A549 (cell line): ENCODE measurements at regions of chr7 and their contacts with region 1.

Region 1: GRCh38 chr7:73856941-73857340 is 4.0 kb upstream of the TMEM270 start:
- DNase-seq: no peak
- ATAC-seq: no peak
- H3K4me3 ChIP-seq: no peak overlapping the region
- H3K27ac ChIP-seq: no peak overlapping the region; a peak in 1 of 6 replicates
- H3K4me1 ChIP-seq: peaks cover 8% of the 10 kb centered on the region
- CTCF ChIP-seq: no peak
- EP300 ChIP-seq: no peak
- POLR2A ChIP-seq: no peak
- RAD21 ChIP-seq: no peak

Region 2: DNA sequence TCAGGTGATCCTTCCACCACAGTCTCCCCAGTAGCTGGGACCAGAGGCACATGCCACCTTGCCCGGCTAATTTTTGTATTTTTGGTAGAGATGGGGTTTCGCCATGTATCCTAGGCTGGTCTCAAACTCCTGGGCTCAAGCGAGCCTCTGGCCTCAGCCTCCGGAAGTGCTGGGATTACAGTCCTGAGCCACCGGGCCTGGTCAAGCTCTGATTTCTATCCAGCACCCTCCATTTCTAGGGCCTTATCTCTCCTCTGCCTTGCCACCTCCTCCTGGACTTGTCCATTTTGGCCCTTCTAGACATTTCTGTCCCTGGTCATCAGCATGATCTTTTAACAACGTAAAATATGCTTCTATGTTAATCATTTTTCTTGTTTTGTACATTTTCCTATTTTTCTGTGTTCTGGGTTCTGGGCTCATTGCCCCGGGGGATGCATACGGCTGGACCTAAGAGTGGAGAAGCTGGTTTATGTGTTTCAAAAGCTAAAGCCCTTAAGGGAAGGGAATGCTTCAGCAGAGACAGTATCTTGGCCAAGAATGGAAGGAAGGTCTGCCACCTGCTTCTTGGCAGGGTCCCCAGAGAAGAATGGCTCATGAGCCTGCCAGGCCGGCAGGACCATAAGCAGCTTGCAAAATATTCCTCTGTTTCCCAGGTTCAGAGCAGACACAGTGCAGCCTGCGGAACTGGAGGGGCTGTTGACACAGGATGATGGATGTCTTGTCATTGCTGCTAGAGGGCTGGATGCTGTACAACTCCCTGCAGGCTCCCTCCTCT is 110.8 kb before region 1 on chr7:
- CTCF ChIA-PET with region 1: interaction called, 21 read pairs
- POLR2A ChIA-PET with region 1: no interaction called
- DNase-seq: no peak
- ATAC-seq: no peak
- H3K4me3 ChIP-seq: no peak overlapping the region
- H3K27ac ChIP-seq: no peak overlapping the region
- H3K4me1 ChIP-seq: peaks cover 10% of the 10 kb centered on the region
- CTCF ChIP-seq: no peak
- EP300 ChIP-seq: no peak
- POLR2A ChIP-seq: no peak
- RAD21 ChIP-seq: no peak

Region 3: DNA sequence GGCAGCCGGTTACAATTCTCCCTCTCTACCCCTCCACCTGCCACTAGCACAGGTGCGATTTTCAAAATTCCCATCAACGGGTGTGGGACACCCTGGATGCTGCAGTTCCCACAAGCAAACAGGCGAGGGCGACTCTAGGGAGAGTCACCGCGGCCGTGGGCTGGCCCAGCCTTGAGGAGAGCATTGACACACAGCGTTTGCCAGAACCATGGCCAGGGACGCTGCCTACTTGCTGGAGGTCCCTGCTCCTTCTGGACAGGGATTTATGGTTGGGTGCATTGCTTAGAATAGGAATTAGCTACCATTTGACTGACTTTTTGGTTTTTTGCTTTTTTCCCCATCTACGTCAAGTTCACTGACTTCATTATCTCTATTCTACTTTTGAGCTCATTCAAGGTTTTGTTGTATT is 45.2 kb before region 1 on chr7:
- CTCF ChIA-PET with region 1: interaction called, 53 read pairs
- POLR2A ChIA-PET with region 1: no interaction called
- DNase-seq: peak; percentile 67 to 72
- ATAC-seq: peak; percentile 93 to 97
- H3K4me3 ChIP-seq: no peak overlapping the region
- H3K27ac ChIP-seq: no peak overlapping the region
- H3K4me1 ChIP-seq: peaks cover 7% of the 10 kb centered on the region; the same call in 2 of the 3 replicates
- CTCF ChIP-seq: peak; percentile 59
- EP300 ChIP-seq: no peak
- POLR2A ChIP-seq: no peak
- RAD21 ChIP-seq: peak; percentile 63 to 72

Region 4: GRCh38 chr7:73817121-73817520 is 39.8 kb before region 1 on chr7:
- CTCF ChIA-PET with region 1: interaction called, 53 read pairs
- POLR2A ChIA-PET with region 1: no interaction called
- DNase-seq: no peak
- ATAC-seq: no peak
- H3K4me3 ChIP-seq: no peak overlapping the region
- H3K27ac ChIP-seq: no peak overlapping the region
- H3K4me1 ChIP-seq: peaks cover 8% of the 10 kb centered on the region
- CTCF ChIP-seq: no peak
- EP300 ChIP-seq: no peak
- POLR2A ChIP-seq: no peak
- RAD21 ChIP-seq: no peak